Aorta (tissue), 5 donors: ENCODE measurements at regions of chr2 and their contacts with region 1.

Region 1: DNA sequence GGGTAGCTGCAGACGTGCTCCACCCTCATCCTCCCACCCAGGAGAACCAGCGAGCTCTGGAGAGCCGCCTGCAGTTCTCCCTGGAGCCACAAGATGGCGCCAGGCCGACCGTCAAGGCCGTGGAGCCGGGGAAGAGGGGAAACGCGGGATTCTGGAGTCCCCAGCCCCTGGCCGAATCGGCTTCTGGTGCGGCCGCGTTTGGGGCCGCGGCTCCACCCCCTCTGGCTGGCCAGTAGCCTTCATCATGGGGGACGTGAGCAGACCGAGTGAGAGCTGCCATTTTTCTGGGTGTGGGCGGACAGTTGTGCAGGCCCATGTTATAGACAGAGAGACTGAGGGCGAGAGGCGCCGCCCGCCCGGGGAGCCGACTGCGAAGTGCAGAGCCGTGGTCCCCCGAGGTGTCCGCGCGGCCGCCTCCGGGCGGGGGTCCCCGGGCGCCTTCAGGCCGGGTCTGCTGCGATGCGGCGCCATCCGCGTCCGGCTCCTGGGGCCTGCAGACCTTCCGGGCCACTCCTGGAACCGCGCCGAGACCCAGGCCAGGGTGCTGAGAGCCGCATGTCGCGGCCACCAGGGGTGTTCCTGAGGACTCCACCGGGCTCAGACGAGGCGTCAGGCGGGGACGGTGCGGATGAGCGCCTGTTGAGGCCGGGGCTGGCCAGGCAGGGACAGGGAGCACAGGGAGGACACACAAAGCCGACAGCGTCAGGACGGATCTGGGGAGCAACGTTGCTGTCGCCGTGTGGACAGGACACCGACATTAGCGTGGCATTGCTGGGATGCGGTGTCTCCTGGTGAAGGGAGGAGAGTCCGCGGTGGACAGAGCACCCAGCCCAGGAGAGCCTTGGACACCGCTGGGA is 418.2 kb upstream of the HS6ST1 start:
- DNase-seq: peak; percentile 84 to 93
- ATAC-seq: peak; percentile 87
- H3K4me3 ChIP-seq: no peak overlapping the region
- H3K27ac ChIP-seq: no peak overlapping the region
- H3K4me1 ChIP-seq: no peaks in the 10 kb centered on the region
- H3K27me3 ChIP-seq: no peaks in the 10 kb centered on the region

Region 2: DNA sequence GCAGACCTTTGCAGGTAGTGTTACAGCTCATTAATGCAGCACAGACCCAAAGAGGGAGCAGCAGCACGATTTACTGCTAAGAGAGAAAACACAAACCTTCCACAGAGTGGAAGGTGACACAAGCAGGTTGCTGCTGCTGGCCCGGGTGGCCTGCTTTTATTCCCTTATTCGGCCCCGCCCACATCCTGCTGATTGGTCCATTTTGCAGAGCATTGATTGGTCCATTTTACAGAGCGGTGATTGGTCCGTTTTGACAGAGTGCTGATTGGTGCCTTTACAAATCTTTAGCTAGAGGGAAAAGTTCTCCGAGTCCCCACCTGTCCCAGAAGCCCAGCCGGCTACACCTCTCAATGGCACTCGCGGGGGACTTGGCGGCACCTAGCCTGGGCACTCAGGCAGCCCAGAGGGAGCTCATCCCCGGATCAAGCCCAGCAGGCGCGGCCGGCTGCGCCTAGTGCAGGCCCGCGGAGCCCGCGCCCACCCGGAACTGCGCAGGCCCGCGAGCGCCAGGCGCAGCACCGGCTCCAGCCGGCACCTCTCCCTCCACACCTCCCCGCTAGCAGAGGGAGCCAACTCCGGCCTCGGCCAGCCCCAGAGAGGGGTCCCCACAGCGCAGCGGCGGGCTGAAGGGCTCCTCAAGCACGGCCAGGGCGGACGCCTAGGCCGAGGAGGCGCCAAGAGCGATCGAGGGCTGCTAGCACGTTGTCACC is 407.3 kb after region 1 on chr2:
- intact Hi-C with region 1: no loop called
- DNase-seq: no peak
- ATAC-seq: no peak
- H3K4me3 ChIP-seq: no peak overlapping the region
- H3K27ac ChIP-seq: no peak overlapping the region
- H3K4me1 ChIP-seq: no peaks in the 10 kb centered on the region
- H3K27me3 ChIP-seq: no peaks in the 10 kb centered on the region

Region 3: DNA sequence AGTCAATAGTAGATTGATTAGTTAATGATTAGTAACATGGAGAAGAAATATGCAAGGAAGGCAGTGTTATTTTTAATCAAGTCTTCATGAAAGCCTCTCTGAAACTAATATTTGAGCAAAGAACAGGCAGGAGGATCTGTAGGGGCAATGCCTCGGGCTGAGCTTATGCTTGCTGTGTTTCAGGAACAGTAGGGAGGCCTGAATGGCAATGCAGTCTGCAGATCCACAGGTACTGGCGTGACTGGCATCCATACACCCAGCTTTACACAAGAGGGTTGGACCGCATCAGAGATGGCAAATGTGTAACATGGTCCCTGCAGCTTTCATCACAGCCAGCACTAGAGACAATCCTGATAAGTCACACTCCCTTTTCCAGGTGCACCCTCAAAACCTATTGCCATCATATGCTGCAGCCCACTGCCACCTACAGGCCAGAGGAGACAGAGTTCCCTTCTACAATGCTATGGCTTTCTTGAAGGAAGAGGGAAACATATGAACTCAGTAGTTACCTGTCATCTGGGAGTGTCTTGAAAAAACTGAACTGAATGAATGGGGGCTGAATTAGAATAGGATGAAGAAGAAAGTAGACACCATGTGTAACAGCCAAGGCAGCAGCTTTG is 660.2 kb after region 1 on chr2:
- intact Hi-C with region 1: loop called in 1 of 2 experiments (anchors 10 kb)
- DNase-seq: no peak
- ATAC-seq: no peak
- H3K4me3 ChIP-seq: no peak overlapping the region
- H3K27ac ChIP-seq: no peak overlapping the region
- H3K4me1 ChIP-seq: no peaks in the 10 kb centered on the region
- H3K27me3 ChIP-seq: no peaks in the 10 kb centered on the region

Region 4: GRCh38 chr2:129923265-129924091 is 1186.6 kb after region 1 on chr2:
- intact Hi-C with region 1: loop called in 1 of 2 experiments (anchors 10 kb)
- DNase-seq: no peak
- ATAC-seq: peak; percentile 55
- H3K4me3 ChIP-seq: no peak overlapping the region
- H3K27ac ChIP-seq: no peak overlapping the region
- H3K4me1 ChIP-seq: no peaks in the 10 kb centered on the region
- H3K27me3 ChIP-seq: no peaks in the 10 kb centered on the region